PC-9 (cell line): ENCODE measurements at regions of chr17 and their contacts with region 1.

Region 1: GRCh38 chr17:9696266-9697027 is 51.1 kb downstream of the USP43 start:
- DNase-seq: no peak
- H3K4me3 ChIP-seq: no peak overlapping the region
- H3K27ac ChIP-seq: no peak overlapping the region
- H3K4me1 ChIP-seq: no peaks in the 10 kb centered on the region
- H3K27me3 ChIP-seq: no peaks in the 10 kb centered on the region
- CTCF ChIP-seq: no peak

Region 2: DNA sequence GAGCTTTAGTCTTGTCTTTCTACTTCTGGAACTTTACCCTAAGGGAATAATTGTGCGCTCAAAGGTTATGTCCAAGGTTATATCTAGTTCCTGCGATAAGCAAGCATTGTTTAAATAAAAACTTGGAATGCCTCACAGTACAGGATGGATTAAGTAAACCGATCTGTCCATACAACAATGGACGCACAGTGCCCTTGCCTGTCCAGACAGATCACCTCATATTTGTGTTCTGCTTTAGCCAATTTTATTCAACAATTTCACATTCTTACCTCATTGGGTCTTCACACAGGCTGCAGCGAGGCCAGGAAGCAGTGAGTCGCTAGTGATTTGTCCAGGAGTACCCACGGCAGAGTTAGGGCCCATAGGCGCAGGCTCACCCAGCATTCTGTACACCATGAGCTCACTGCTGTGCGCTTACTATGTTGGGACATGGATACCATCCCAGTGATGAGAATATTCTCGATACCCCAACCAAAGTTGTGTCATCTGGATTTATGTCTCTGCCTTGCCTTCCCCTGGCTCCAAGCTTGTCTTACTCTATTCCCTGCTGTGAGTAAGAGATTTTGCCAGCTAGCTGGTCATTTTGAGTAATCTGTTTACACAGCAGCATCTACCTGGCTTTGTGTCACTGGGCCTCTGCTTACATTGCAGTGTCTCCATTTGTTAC is 11.4 kb before region 1 on chr17:
- CTCF ChIA-PET with region 1: interaction called, 10 read pairs
- POLR2A ChIA-PET with region 1: no interaction called
- intact Hi-C with region 1: no loop called
- DNase-seq: no peak
- H3K4me3 ChIP-seq: no peak overlapping the region
- H3K27ac ChIP-seq: no peak overlapping the region
- H3K4me1 ChIP-seq: no peaks in the 10 kb centered on the region
- H3K27me3 ChIP-seq: no peaks in the 10 kb centered on the region
- CTCF ChIP-seq: no peak

Region 3: DNA sequence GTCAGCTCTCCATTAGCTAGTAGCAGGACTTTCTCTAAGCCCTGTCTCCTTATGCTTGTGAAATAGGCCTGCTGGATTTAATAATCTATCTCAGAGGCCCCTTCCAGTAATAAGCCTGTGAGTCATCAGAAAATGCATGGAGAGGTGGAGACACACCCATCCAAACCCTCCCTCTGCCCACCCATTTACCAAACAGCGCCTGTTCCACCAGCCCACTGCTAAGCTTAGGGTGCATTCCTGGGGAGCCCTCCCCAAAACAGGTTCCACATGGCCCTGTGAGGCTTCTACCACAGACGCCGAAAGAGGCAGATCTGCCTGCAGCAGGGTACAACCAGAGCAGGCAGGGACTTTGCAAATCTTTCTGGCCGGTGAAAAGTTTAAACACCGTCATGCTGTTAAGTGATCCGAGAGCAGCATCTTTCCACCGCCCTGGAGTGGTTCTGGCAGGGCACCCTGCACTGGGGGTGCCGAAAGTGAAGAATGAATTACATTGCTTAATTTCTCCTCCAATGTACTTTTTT is 402.7 kb after region 1 on chr17:
- CTCF ChIA-PET with region 1: no interaction called
- POLR2A ChIA-PET with region 1: no interaction called
- intact Hi-C with region 1: no loop called
- DNase-seq: no peak
- H3K4me3 ChIP-seq: no peak overlapping the region
- H3K27ac ChIP-seq: no peak overlapping the region
- H3K4me1 ChIP-seq: no peaks in the 10 kb centered on the region
- H3K27me3 ChIP-seq: peaks cover 63% of the 10 kb centered on the region
- CTCF ChIP-seq: no peak